ENCODE measurements at regions of chr3 and their contacts with region 1.

Region 1: GRCh38 chr3:126522363-126522788 is 1.6 kb upstream of the CHST13 start:
- DNase-seq: peak; percentile 37
- ATAC-seq: no peak
- H3K4me3 Mint-ChIP-seq: no peak overlapping the region
- H3K27ac Mint-ChIP-seq: no peak overlapping the region
- H3K4me1 Mint-ChIP-seq: no peaks in the 10 kb centered on the region
- H3K27me3 Mint-ChIP-seq: peaks cover 24% of the 10 kb centered on the region
- CTCF ChIP-seq: peak; percentile 81

Region 2: GRCh38 chr3:126621171-126621570 is 98.8 kb after region 1 on chr3:
- CTCF ChIA-PET with region 1: no interaction called
- POLR2A ChIA-PET with region 1: no interaction called
- intact Hi-C with region 1: no loop called
- DNase-seq: no peak
- ATAC-seq: no peak
- H3K4me3 Mint-ChIP-seq: no peak overlapping the region
- H3K27ac Mint-ChIP-seq: no peak overlapping the region
- H3K4me1 Mint-ChIP-seq: no peaks in the 10 kb centered on the region
- H3K27me3 Mint-ChIP-seq: peaks cover 4% of the 10 kb centered on the region
- CTCF ChIP-seq: no peak

Region 3: DNA sequence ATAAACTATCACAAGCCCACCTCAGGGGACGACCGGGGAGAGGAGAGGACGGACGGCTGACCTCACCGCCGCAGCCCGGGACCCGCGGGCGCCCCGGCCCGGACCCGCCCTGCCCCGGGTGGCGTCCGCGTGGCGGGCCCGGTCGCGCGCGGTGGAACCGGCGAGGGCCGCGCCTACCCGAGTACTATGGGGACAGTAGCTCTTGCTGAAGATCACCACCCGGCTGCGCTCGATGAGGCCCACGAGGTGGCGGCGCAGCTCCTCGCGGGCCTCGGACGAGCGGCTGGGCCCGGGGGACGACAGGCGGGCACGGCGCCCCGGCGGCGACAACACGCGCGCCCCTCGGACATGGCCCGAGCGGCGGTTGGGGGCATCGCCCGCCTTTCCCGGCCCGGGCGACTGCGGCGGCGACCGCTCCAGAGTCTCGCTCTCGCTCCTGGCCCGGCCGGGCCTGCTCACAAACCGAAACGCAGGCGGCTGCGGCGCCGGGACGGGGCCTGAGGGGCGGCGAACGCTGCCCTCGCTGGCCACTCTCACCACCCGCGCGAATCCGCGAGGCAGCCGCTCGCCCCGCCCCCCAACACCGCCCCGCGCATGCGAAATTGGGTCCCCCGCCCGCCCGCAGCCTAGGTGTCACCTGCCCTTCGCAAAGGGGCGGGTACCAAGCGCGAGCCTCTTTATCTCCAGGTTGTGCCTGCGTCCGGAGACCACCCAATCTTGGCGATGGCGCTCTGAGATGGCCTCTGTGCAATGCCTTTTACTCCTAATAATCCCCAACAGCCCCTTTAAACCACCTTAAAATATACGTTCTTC is 132.4 kb after region 1 on chr3 and contains the start of gene TXNRD3:
- CTCF ChIA-PET with region 1: no interaction called
- POLR2A ChIA-PET with region 1: no interaction called
- intact Hi-C with region 1: loop called (anchors 10 kb)
- DNase-seq: peak; percentile 43
- ATAC-seq: peak; percentile 85
- H3K4me3 Mint-ChIP-seq: peak within 1 kb of the TSS; percentile 78
- H3K27ac Mint-ChIP-seq: no peak within 1 kb of the TSS
- H3K4me1 Mint-ChIP-seq: peaks cover 7% of the 10 kb centered on the region
- H3K27me3 Mint-ChIP-seq: peaks cover 34% of the 10 kb centered on the region
- CTCF ChIP-seq: no peak
- total RNA-seq, gene TXNRD3: 0.51 and 0.76 TPM in 2 replicates

Region 4: DNA sequence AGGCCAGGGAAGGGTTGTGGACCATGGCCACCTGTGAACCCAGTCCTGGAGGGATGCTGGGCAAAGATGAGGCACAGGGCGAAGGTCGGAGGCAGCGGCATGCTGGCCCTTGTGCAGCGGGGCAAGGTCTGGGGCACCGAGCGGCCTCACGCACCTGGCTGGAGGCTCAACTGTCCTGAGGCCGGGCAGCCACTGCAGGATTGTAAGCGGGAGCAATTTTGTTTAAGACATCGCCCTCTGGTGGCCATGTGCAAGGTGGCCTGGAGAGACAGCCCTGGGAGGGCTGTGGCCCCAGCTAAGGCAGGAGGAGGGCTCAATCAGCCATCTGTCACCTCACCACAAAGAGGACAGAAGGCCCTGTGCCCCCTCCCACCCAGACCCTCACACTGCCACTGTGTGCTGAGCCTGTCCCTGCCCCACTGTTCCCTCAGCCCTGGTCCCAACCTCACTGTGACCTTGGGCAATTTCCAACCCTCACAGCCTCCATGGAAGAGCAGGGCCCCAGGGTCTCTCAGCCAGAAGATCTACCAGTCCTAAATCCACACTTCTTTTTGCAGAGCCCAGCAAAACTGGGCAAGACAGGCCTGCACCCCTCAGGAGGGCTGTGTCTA is 1021.9 kb after region 1 on chr3:
- CTCF ChIA-PET with region 1: interaction called, 47 read pairs
- POLR2A ChIA-PET with region 1: no interaction called
- intact Hi-C with region 1: loop called (anchors 1 kb)
- DNase-seq: peak; percentile 51
- ATAC-seq: peak; percentile 46
- H3K4me3 Mint-ChIP-seq: no peak overlapping the region
- H3K27ac Mint-ChIP-seq: no peak overlapping the region
- H3K4me1 Mint-ChIP-seq: peaks cover 14% of the 10 kb centered on the region
- H3K27me3 Mint-ChIP-seq: peaks cover 3% of the 10 kb centered on the region
- CTCF ChIP-seq: no peak